ENCODE measurements at regions of chr16 and their contacts with region 1.

Region 1: DNA sequence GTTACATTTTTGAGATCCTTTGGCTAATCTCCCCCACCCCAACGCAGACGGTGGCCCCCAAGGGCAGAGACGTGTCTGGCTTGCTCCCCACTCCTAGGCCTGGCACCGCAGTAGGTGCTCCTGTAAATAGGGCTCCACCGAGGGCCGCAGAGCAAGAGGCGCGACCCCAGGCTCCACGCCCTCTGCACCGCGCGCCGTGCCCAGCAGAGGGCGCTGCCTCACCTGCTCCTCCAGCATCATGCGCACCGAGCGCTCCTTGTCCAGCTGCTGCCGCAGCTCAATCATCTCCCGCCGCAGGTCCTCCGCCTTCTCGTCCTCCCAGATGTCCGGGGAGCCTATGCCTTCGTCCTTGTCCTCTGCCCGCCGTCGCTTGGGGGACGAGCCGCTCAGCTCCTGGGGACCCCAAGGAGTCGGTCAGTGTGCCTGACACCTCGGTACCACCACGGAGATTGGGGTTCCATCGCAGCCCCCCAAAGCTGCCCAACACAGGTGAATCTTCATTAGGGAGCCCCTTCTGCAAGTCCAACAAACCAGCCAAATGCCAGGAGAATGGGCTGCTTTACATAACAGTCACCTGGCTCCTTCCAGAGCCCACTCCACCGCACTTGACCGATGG is 11.2 kb downstream of the TFAP4 start:
- DNase-seq: no peak
- H3K4me3 ChIP-seq: no peak overlapping the region
- CTCF ChIP-seq: peak; percentile 67

Region 2: DNA sequence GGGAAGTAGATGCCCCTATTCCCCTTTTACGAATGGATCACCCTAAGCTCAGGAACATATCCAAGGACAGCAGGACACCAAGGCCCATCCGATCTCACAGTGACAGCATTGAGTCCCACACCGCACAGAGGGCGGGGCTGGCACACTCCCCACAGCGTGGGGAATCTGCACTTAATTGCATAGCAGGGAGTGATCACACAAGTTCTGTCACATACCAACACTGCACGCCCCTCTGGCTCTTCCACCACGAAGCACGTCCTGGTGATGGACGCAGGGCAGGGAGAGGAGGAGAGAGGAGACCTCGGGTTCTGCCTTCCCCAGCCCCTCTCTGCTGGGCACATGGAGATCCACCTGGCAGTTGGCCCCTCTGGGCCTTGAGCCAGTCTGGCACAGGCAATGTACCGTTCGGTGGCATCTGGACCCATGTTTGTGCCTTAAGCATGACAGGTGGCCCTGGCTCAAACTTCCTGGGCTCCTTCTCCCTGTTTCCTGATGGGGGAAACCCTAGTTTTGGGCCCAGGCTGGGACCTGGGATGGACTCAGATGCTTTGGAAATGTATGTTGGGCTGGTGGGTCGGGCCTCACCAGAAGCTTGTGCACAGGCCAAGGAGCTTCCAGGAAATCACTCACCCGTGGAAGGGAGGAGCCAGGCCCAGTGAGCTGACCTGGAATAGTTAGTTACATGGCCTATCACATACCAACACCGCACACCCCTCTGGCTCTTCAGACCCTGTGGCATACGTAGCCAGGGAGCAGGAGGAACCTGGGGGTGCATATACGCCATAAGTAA is 346.0 kb before region 1 on chr16:
- CTCF ChIA-PET with region 1: no interaction called
- POLR2A ChIA-PET with region 1: no interaction called
- DNase-seq: no peak
- H3K4me3 ChIP-seq: no peak overlapping the region
- CTCF ChIP-seq: no peak

Region 3: GRCh38 chr16:3983081-3983520 is 278.6 kb before region 1 on chr16:
- CTCF ChIA-PET with region 1: interaction called, 18 read pairs
- POLR2A ChIA-PET with region 1: no interaction called
- DNase-seq: no peak
- H3K4me3 ChIP-seq: no peak overlapping the region
- CTCF ChIP-seq: peak; percentile 89

Region 4: DNA sequence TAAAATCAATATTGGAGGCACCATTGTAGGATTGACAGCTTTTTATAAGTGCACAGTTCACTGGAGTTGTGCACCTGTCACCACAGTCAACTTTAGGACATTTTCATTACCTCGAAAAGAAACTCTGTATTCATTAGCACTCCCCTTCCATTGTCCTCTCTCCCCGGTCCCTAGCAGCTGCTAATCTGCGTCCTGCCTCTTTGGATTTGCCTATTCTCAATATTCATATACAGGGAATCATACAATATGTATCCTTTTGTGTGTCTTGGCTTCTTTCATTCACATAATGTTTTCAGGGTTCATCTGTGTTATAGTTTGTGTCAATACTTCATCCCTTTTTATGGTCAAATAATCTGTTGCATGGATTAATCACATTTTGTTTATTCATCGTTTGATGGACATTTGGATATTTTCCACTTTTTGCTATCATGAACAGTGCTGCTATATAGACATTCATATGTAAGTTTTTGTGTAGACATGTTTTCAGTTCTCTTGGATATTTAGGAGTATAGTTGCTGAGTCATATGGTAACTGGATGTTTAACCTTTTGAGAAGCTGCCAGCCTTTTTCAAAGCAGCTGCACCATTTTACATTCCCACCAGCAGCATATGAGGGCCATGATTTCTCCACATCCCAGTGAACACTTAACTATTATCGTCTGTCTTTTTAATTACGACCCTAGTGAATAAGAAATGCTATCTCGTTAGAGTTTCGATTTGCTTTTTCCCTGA is 173.8 kb after region 1 on chr16:
- CTCF ChIA-PET with region 1: no interaction called
- POLR2A ChIA-PET with region 1: no interaction called
- DNase-seq: no peak
- H3K4me3 ChIP-seq: no peak overlapping the region
- CTCF ChIP-seq: no peak

Measured in AG04449 (cell line).